Calu3 (cell line): ENCODE measurements at regions of chr3 and their contacts with region 1.

Region 1: DNA sequence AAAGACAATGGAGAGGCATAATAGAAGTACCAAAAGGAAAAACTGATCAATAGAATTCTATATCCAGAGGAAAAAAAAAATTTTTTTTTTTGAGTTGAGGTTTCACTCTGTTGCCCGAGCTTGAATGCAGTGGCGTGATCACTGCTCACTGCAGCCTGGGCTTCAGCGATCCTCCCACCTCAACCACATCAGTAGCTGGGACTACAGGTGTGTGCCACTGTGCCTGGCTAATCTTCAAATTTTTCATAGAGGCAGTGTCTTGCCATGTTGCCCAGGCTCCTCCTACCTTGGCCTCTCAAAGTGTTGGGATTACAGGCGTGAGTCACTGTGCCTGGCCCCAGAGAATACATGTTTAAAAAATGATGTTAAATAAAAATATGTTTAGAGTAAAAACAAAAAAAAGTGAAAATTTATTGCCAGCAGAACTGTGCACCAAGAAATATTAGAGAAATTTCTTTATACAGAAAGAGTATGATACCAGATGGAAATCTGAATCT is 154.3 kb upstream of the ZBTB20 start:
- DNase-seq: no peak
- H3K4me3 Mint-ChIP-seq: no peak overlapping the region
- H3K27ac Mint-ChIP-seq: no peak overlapping the region
- H3K4me1 Mint-ChIP-seq: no peaks in the 10 kb centered on the region
- H3K27me3 Mint-ChIP-seq: no peaks in the 10 kb centered on the region
- CTCF ChIP-seq: no peak

Region 2: DNA sequence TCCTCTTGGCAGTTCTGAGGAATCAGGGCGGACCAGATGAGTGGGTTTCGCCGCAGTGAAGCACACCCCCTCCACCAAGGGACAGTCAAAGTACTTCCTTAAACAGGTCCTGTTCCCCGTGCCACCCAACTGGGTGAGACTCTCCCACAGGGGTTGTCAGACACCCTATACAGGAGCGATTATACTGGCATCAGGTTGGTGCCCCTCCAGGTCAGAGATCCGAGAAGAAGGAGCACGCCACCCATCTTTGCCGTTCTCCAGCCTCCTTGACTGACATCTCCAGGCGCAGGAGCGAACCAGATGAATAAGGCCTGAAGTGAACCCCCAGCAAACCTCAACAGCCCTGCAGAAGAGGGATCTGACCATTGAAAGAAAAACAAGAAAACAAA is 46.2 kb before region 1 on chr3:
- CTCF ChIA-PET with region 1: no interaction called
- intact Hi-C with region 1: loop called (anchors 5 kb)
- DNase-seq: no peak
- H3K4me3 Mint-ChIP-seq: no peak overlapping the region
- H3K27ac Mint-ChIP-seq: no peak overlapping the region
- H3K4me1 Mint-ChIP-seq: no peaks in the 10 kb centered on the region
- H3K27me3 Mint-ChIP-seq: no peaks in the 10 kb centered on the region
- CTCF ChIP-seq: no peak